ENCODE measurements at regions of chr17 and their contacts with region 1.

Region 1: DNA sequence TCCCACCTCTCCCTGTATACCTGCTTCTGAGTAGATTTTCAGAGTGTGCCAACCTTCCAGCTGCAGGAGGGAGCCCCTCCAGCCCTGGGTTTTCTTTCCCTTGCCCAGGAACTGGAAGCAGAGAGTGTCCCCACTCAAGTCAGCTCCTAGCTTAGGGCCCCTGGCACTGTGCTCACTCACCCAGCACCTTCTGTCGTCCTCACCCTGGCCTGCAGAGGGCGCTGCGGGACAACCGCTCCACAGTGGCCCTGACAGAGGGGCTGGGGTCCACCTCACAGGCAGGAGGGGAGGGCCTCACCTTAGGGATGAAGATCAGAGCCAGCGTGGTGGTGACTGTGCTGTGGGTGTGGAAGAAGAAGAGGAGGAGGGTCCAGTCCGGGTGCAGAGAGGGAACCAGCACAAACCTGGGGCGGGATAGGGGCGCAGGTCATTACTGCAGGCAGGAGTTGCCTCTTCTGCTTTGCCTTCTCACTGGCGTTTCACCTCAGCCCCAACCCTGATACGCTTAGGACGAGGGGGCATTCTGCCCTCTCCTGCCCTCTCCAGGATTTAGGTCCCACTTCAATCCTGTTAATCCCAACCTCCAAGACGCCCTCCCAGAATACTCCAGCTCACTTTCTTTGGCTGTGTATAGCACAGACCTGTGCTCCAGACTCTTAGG is 10.0 kb downstream of the GPR179 start:
- DNase-seq: no peak
- ATAC-seq: no peak
- H3K4me3 ChIP-seq: no peak overlapping the region
- H3K4me3 Mint-ChIP-seq: no peak overlapping the region
- H3K27ac ChIP-seq: no peak overlapping the region
- H3K27ac Mint-ChIP-seq: no peak overlapping the region
- H3K4me1 ChIP-seq: no peaks in the 10 kb centered on the region
- H3K4me1 Mint-ChIP-seq: no peaks in the 10 kb centered on the region
- H3K27me3 ChIP-seq: peaks cover 0 to 8% (median 3%) of the 10 kb centered on the region in 4 experiments
- H3K27me3 Mint-ChIP-seq: peaks cover 22% of the 10 kb centered on the region
- CTCF ChIP-seq: peak; percentile 35

Region 2: DNA sequence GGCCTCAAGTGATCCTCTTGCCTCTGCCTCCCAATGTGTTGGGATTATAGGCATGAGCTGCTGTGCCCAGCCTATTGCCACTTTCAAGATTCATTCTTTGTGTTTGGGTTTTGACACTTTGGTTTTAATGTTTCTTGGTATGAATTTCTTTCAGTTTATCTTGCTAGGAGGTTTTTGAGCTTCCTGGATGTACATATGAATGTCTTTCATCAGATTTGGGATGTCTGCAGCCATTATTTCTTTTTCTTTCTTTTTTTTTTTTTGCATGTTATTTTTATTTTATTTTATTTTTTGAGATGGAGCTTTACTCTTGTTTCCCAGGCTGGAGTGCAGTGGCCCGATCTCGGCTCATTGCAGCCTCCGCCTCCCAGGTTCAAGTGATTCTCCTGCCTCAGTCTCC is 18.3 kb before region 1 on chr17:
- CTCF ChIA-PET with region 1: no interaction called
- POLR2A ChIA-PET with region 1: no interaction called
- intact Hi-C with region 1: no loop called
- DNase-seq: no peak
- ATAC-seq: no peak
- H3K4me3 ChIP-seq: no peak overlapping the region
- H3K4me3 Mint-ChIP-seq: no peak overlapping the region
- H3K27ac ChIP-seq: no peak overlapping the region
- H3K27ac Mint-ChIP-seq: no peak overlapping the region
- H3K4me1 ChIP-seq: no peaks in the 10 kb centered on the region
- H3K4me1 Mint-ChIP-seq: no peaks in the 10 kb centered on the region
- H3K27me3 ChIP-seq: no peaks in the 10 kb centered on the region
- H3K27me3 Mint-ChIP-seq: no peaks in the 10 kb centered on the region
- CTCF ChIP-seq: no peak

Region 3: DNA sequence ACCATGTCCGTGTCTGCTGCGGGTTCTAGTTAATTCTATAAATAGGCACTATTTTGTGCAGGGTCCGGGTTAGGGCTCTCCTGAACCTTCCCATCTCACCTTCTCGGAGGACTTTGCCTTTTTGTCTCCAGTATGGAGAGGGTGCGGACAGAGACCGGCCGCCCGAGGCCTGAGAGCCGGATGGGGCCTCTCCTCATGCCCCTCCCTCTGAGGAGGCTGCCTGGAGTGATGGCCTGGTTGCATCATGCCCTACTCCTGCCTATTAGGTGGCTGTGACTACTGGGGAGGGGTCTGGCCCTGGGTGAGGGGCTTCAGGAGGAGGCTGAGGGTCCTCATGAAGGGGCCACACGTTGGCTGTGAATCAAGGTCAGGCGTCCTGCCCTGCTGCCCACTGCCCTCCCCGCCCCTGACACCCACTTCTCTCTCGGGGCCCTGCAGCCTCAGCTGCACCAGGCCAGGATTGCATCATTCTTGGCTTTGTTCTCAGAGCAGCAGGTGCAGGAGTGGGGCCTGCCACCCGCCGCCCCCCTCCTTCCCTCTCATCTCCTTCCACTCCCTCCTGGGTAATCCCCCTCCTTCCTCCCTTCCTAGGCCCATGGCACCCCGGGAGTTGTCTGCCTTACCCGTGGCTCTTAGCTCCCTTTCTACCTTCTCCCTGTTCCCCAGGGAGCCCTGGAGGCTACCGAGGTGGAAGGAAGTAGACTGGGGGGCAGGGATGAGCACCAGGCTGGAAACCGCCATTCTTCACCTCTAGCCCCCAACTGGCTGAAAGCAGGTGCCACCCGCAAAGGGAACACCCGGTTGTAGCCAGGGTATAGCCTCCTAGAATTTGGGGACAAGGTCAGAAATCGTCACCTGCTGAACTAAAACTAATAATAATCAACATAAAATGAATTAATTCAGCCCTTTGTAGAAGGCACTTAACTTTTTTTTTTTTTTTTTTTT is 81.8 kb after region 1 on chr17:
- CTCF ChIA-PET with region 1: interaction called, 10 read pairs
- POLR2A ChIA-PET with region 1: no interaction called
- intact Hi-C with region 1: no loop called
- DNase-seq: peak; percentile 25
- ATAC-seq: no peak
- H3K4me3 ChIP-seq: no peak overlapping the region
- H3K4me3 Mint-ChIP-seq: no peak overlapping the region
- H3K27ac ChIP-seq: no peak overlapping the region
- H3K27ac Mint-ChIP-seq: no peak overlapping the region
- H3K4me1 ChIP-seq: peaks cover 8 to 10% of the 10 kb centered on the region in 2 donors
- H3K4me1 Mint-ChIP-seq: peaks cover 3% of the 10 kb centered on the region
- H3K27me3 ChIP-seq: peaks cover 0 to 43% (median 11%) of the 10 kb centered on the region in 4 experiments
- H3K27me3 Mint-ChIP-seq: peaks cover 30% of the 10 kb centered on the region
- CTCF ChIP-seq: no peak

Measured in B cell (primary cell).